H1 (cell line): ENCODE measurements at regions of chr7 and their contacts with region 1.

Region 1: DNA sequence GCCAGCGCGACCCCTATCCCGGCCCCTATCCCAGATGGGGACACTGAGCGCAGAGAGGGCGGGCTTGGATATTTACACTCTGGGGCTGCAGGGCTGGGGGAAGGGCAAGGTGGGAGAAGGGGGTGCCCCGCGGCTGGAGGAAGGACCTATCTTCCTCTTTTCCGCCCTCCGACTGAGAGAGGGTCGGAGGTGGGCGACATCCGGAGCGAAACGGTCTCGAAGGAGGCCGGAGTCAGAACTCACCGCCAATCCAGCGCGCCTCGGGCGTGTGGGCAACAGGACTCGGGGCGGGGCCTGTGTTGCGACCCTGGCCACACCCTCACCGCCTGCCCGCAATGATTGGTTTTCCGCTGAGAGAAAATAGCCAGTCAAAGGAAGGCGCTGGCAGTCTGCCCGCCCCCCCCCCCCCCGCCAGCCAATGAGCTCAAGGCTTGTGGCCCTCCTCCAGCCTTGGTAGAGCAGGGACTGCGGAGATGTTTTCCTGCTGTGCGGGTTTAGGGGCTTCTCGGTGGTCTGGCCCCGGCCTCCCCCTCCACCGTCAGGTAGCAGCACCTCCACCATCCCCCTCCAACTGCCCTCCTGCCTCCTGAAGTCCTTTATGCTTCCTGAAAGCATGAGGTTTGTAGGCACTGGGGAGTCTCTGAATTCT is at the start of gene METTL27:
- DNase-seq: peak; percentile 82 to 91
- H3K4me3 ChIP-seq: peak within 1 kb of the TSS; percentile 52 to 78 (median 58)
- H3K27ac ChIP-seq: 0 out of 2 replicates have a peak within 1 kb of the TSS, but pooled peaks have one; percentile 61
- H3K4me1 ChIP-seq: peaks cover 0 to 11% (median 5%) of the 10 kb centered on the region in 4 experiments; a peak in 5 of 7 replicates
- H3K27me3 ChIP-seq: no peaks in the 10 kb centered on the region
- CTCF ChIP-seq: no peak
- EP300 ChIP-seq: no peak
- POLR2A ChIP-seq: peak in 1 of 2 experiments; percentile 61; a peak in 2 of 3 replicates
- RAD21 ChIP-seq: no peak
- total RNA-seq, gene METTL27: 5.6 and 6.2 TPM in 2 replicates

Region 2: DNA sequence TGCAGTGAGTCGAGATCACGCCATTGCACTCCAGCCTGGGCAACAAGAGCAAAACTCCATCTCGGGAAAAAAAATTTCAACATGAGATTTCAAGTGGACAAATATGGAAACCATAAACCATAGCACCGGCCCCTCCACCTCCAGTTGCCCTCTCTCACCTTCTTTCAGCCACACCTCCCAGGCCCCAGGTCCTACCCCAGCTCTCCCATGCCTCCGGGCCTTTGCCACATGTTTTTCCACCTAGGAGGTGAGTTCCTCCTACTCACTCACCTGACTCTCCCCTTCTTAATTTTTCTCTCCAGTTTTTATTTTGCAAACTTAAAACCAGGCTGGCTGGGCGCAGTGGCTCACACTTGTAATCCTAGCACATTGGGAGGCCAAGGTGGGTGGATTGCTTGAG is 25.2 kb before region 1 on chr7:
- CTCF ChIA-PET with region 1: interaction called, 61 read pairs
- POLR2A ChIA-PET with region 1: interaction called, 4 read pairs
- DNase-seq: no peak
- H3K4me3 ChIP-seq: no peak overlapping the region
- H3K27ac ChIP-seq: no peak overlapping the region
- H3K4me1 ChIP-seq: no peaks in the 10 kb centered on the region; a peak in 2 of 7 replicates
- H3K27me3 ChIP-seq: no peaks in the 10 kb centered on the region
- CTCF ChIP-seq: no peak
- EP300 ChIP-seq: no peak
- POLR2A ChIP-seq: no peak
- RAD21 ChIP-seq: no peak

Region 3: DNA sequence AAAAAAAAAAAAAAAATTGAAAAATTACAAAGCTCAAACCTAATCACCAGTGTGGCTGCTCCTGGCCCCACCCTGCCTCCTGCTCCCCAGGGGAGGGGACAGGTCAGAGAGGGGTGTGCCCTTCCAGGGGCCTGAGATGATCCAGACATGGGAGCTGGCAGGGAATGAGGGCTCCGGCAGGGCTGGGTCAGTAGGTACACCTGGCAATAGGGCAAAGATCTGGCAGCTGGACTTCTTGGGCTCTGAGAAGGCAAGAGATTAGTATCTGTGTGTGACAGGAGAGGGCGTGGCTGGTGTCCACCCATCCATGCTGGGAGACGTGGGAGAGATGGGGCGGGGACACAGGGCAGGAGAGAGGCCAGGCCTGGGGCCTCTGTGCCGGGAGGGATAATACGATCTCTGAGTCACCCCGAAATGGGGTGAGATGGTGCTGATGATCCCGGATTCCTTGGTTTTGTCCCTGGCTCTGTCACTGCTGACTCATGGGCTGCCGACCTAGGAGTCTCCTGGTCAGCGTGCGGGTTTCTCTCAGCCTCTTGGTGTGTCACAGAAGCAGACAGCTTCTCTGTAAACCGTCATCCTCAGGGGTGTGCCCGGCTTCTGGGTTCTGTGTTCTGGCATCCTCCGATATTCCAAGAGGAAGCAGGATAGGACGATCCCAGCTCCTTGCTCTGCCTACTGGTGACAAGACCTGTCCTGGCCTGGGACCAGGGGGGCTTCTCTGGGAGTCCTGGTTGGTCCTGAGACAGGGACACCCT is 19.9 kb before region 1 on chr7:
- CTCF ChIA-PET with region 1: interaction called, 65 read pairs
- POLR2A ChIA-PET with region 1: interaction called, 12 read pairs
- DNase-seq: no peak
- H3K4me3 ChIP-seq: no peak overlapping the region
- H3K27ac ChIP-seq: no peak overlapping the region
- H3K4me1 ChIP-seq: peaks cover 2 to 5% (median 3%) of the 10 kb centered on the region in 4 experiments
- H3K27me3 ChIP-seq: peaks cover 0 to 5% (median 0%) of the 10 kb centered on the region in 4 experiments; a peak in 1 of 7 replicates
- CTCF ChIP-seq: no peak
- EP300 ChIP-seq: no peak
- POLR2A ChIP-seq: no peak
- RAD21 ChIP-seq: no peak

Region 4: DNA sequence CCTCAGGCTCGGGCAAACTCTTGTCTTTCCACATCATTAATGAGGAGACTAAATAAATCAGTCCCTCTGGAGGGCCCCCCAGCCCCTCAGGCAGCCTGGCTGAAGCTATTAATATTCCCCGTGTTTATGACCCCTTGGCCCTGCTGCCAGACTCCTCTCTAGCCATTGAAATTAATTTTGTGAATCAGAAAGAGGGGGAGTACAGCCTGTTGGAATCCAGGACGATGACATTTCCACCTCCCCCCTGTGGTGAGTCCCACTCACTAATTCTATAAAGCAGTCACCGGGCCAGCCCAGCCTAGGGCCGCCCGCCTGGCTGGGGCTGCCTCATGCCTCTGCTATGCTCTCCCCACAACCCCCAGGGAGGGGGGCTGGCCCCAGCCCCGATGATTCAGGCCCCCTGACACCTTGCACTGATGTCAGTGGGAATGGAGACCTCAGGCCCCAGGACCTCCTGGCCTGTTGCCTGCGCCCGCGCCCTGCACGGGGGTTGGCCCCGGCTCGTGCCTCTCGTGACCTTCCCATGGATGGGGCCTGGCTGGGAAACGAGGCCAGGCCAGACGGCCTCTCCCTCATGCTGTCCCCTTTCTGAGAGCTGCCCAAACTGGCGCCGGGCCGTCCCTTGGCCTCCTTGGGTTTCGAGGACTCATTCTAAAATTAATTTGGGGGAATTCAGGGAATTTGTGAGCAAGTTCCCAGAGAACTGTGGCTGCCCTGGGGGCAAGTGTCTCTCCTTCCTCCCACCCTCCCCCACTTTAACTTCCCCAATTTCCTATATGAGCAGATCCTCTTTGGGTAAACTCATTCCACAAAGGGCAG is 52.6 kb after region 1 on chr7:
- CTCF ChIA-PET with region 1: no interaction called
- POLR2A ChIA-PET with region 1: no interaction called
- DNase-seq: no peak
- H3K4me3 ChIP-seq: no peak overlapping the region
- H3K27ac ChIP-seq: no peak overlapping the region
- H3K4me1 ChIP-seq: peaks cover 0 to 4% (median 0%) of the 10 kb centered on the region in 4 experiments; a peak in 1 of 7 replicates
- H3K27me3 ChIP-seq: no peaks in the 10 kb centered on the region
- CTCF ChIP-seq: no peak
- EP300 ChIP-seq: no peak
- POLR2A ChIP-seq: no peak
- RAD21 ChIP-seq: no peak